ENCODE measurements at regions of chrX and their contacts with region 1.

Region 1: GRCh38 chrX:100512471-100512870 is 72.3 kb upstream of the TNMD start:
- DNase-seq: peak in 2 of 9 experiments; percentile 3 to 18
- ATAC-seq: no peak
- H3K4me3 ChIP-seq: no peak overlapping the region
- H3K4me3 Mint-ChIP-seq: no peak overlapping the region
- H3K27ac ChIP-seq: no peak overlapping the region
- H3K27ac Mint-ChIP-seq: no peak overlapping the region
- H3K4me1 ChIP-seq: no peaks in the 10 kb centered on the region
- H3K4me1 Mint-ChIP-seq: no peaks in the 10 kb centered on the region
- H3K27me3 ChIP-seq: no peaks in the 10 kb centered on the region
- H3K27me3 Mint-ChIP-seq: peaks cover 5% of the 10 kb centered on the region
- CTCF ChIP-seq: peak; percentile 48

Region 2: GRCh38 chrX:100600758-100601157 is 88.3 kb after region 1 on chrX:
- CTCF ChIA-PET with region 1: no interaction called
- POLR2A ChIA-PET with region 1: no interaction called
- intact Hi-C with region 1: no loop called
- DNase-seq: no peak
- ATAC-seq: no peak
- H3K4me3 ChIP-seq: no peak overlapping the region
- H3K4me3 Mint-ChIP-seq: no peak overlapping the region
- H3K27ac ChIP-seq: no peak overlapping the region
- H3K27ac Mint-ChIP-seq: no peak overlapping the region
- H3K4me1 ChIP-seq: no peaks in the 10 kb centered on the region
- H3K4me1 Mint-ChIP-seq: no peaks in the 10 kb centered on the region
- H3K27me3 ChIP-seq: no peaks in the 10 kb centered on the region
- H3K27me3 Mint-ChIP-seq: peaks cover 4% of the 10 kb centered on the region
- CTCF ChIP-seq: no peak

Region 3: GRCh38 chrX:100636321-100636991 is 124.0 kb after region 1 on chrX and contains the start of gene TSPAN6:
- CTCF ChIA-PET with region 1: no interaction called
- POLR2A ChIA-PET with region 1: no interaction called
- intact Hi-C with region 1: loop called in 1 of 2 experiments (anchors 2 kb)
- DNase-seq: peak; percentile 29 to 80 (median 70)
- ATAC-seq: peak; percentile 99
- H3K4me3 ChIP-seq: peak within 1 kb of the TSS; percentile 48 to 49
- H3K4me3 Mint-ChIP-seq: peak within 1 kb of the TSS; percentile 93
- H3K27ac ChIP-seq: peak within 1 kb of the TSS in 1 of 2 experiments; percentile 35
- H3K27ac Mint-ChIP-seq: peak within 1 kb of the TSS; percentile 64
- H3K4me1 ChIP-seq: peaks cover 3% of the 10 kb centered on the region
- H3K4me1 Mint-ChIP-seq: peaks cover 9% of the 10 kb centered on the region
- H3K27me3 ChIP-seq: no peaks in the 10 kb centered on the region
- H3K27me3 Mint-ChIP-seq: peaks cover 8% of the 10 kb centered on the region
- CTCF ChIP-seq: peak; percentile 19
- total RNA-seq, gene TSPAN6: 1.2 to 1.3 TPM

Region 4: GRCh38 chrX:100768679-100769338 is 256.3 kb after region 1 on chrX:
- CTCF ChIA-PET with region 1: interaction called, 6 read pairs
- POLR2A ChIA-PET with region 1: no interaction called
- intact Hi-C with region 1: loop called (anchors 1 to 2 kb)
- DNase-seq: peak; percentile 69 to 92 (median 75)
- ATAC-seq: peak; percentile 99
- H3K4me3 ChIP-seq: no peak overlapping the region
- H3K4me3 Mint-ChIP-seq: no peak overlapping the region
- H3K27ac ChIP-seq: no peak overlapping the region
- H3K27ac Mint-ChIP-seq: no peak overlapping the region
- H3K4me1 ChIP-seq: no peaks in the 10 kb centered on the region
- H3K4me1 Mint-ChIP-seq: no peaks in the 10 kb centered on the region
- H3K27me3 ChIP-seq: no peaks in the 10 kb centered on the region
- H3K27me3 Mint-ChIP-seq: peaks cover 3% of the 10 kb centered on the region
- CTCF ChIP-seq: peak; percentile 90

Region 5: GRCh38 chrX:101287402-101287801 is 774.9 kb after region 1 on chrX:
- CTCF ChIA-PET with region 1: no interaction called
- POLR2A ChIA-PET with region 1: no interaction called
- intact Hi-C with region 1: loop called (anchors 5 kb)
- DNase-seq: peak in 3 of 9 experiments; percentile 12 to 42 (median 32)
- ATAC-seq: no peak
- H3K4me3 ChIP-seq: no peak overlapping the region
- H3K4me3 Mint-ChIP-seq: no peak overlapping the region
- H3K27ac ChIP-seq: no peak overlapping the region
- H3K27ac Mint-ChIP-seq: no peak overlapping the region
- H3K4me1 ChIP-seq: no peaks in the 10 kb centered on the region
- H3K4me1 Mint-ChIP-seq: no peaks in the 10 kb centered on the region
- H3K27me3 ChIP-seq: no peaks in the 10 kb centered on the region
- H3K27me3 Mint-ChIP-seq: peaks cover 5% of the 10 kb centered on the region
- CTCF ChIP-seq: peak; percentile 52

Measured in CD8-positive, alpha-beta T cell (primary cell).